ENCODE measurements at regions of chr18 and their contacts with region 1.

Region 1: GRCh38 chr18:50967714-50968661 is at the start of gene ELAC1:
- DNase-seq: peak; percentile 65
- ATAC-seq: peak; percentile 94
- H3K4me3 ChIP-seq: peak within 1 kb of the TSS; percentile 78
- H3K27ac ChIP-seq: peak within 1 kb of the TSS; percentile 45
- H3K4me1 ChIP-seq: peaks cover 17% of the 10 kb centered on the region
- H3K27me3 ChIP-seq: no peaks in the 10 kb centered on the region
- CTCF ChIP-seq: no peak
- total RNA-seq, gene ELAC1: 1.7 and 4.4 TPM in 2 replicates

Region 2: DNA sequence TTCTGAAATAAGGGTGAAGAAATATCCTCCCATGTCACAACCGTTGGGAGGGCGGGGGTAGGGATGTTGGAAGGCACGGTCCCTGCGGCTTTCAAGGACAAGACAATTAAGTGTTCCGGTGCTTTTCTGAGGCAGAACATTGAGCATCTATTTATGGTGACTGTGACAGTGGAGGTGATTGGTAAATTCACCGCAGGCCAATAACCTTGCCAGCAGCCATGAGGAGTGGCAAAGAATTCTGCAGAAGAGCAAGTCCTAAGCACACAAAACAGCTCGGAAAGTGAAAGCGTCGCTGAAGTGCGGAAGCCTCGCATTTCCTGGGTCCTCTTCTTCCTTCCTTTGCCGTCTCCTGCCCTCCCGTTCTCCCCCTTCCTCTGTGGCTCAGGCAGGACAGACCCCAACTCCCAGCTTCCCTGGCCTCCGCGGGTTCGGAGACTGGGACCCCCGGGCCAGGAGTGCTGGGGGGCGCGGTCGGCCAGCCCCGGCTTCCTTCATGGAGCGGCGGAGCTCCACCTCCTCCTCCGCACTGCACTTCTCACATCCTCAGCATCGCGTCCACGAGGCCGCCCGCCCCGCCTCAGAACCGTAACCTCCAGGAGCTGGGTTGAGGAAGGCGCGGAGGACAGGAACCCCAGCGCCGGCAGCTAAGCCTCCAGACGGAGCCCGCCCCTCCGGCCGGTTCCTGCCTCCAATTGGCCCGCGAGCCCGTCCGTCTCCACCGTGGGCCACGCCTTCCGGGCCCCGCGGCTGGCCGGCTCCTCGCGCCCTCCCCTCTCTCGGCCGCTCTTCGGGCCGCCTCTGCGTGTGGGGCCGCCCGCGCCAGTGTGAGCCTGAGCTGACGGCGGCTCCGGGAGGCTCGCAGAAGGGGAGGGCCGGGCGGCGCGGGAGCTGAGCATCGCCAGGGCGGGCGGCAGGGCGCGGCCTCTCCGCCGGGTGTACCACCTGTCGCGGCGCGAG is 89.4 kb before region 1 on chr18 and contains the start of gene ME2:
- CTCF ChIA-PET with region 1: no interaction called
- POLR2A ChIA-PET with region 1: no interaction called
- intact Hi-C with region 1: loop called (anchors 5 kb)
- DNase-seq: peak; percentile 72
- ATAC-seq: peak; percentile 93
- H3K4me3 ChIP-seq: peak within 1 kb of the TSS; percentile 75
- H3K27ac ChIP-seq: peak within 1 kb of the TSS; percentile 39; the same call in 1 of the 2 replicates
- H3K4me1 ChIP-seq: no peaks in the 10 kb centered on the region
- H3K27me3 ChIP-seq: no peaks in the 10 kb centered on the region
- CTCF ChIP-seq: no peak
- total RNA-seq, gene ME2: 21.9 and 29.1 TPM in 2 replicates

Region 3: DNA sequence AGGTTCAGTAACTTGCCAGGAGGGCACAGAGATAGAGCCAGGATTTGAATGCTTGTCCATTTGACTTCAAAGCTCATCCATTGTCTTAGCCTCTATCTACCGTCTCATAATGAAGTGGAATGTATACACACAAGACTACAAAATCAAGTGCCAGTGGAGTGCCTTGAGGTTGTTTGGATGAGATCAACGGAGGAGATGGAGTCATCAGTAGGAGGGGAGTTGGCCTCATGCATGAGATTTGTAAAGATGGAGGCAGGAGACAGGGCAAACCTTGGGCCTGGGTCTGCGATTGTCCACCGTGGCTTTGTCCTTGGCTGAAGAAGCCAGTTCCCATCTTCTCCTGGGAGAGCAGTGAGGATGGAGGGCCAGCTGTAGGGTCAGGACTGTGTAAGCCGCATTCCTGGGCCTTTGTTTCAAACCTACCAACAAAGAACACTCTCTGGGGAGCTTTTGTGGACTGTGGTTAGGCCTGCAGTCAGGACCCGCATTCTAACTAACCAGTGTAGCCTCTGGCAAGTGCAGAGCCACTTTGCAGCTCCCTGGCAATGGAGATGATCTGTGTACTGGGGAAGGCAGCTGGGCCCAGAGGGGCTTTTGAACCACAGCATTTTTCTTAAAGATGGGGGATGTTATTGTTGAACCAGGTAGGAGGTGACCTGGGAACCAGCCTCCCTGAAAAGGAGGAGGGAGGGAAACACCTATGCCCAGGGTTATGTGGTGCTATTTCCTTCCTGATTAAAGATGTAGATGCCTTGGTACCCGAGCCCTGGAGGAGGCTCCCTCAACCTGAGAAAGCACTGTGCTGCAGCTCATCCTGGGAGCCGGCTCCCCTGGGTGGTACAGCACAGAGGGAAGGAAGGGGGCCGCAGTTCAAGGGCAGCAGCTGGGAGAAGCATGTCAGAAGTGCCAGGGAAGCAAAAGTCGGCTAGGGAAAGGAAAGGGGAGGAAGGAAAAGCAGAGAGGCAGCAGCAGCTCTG is 49.2 kb after region 1 on chr18:
- CTCF ChIA-PET with region 1: no interaction called
- POLR2A ChIA-PET with region 1: no interaction called
- intact Hi-C with region 1: no loop called
- DNase-seq: no peak
- ATAC-seq: no peak
- H3K4me3 ChIP-seq: no peak overlapping the region
- H3K27ac ChIP-seq: no peak overlapping the region
- H3K4me1 ChIP-seq: no peaks in the 10 kb centered on the region
- H3K27me3 ChIP-seq: no peaks in the 10 kb centered on the region
- CTCF ChIP-seq: no peak

Region 4: GRCh38 chr18:51029694-51030536 is 61.9 kb after region 1 on chr18 and contains the start of gene SMAD4:
- CTCF ChIA-PET with region 1: no interaction called
- POLR2A ChIA-PET with region 1: no interaction called
- intact Hi-C with region 1: loop called (anchors 1 kb)
- DNase-seq: peak; percentile 78
- ATAC-seq: peak; percentile 77
- H3K4me3 ChIP-seq: peak within 1 kb of the TSS; percentile 80
- H3K27ac ChIP-seq: 0 out of 2 replicates have a peak within 1 kb of the TSS, but pooled peaks have one; percentile 13
- H3K4me1 ChIP-seq: peaks cover 13% of the 10 kb centered on the region; the same call in 1 of the 2 replicates
- H3K27me3 ChIP-seq: no peaks in the 10 kb centered on the region
- CTCF ChIP-seq: no peak
- total RNA-seq, gene SMAD4: 19.7 and 42.8 TPM in 2 replicates

Region 5: GRCh38 chr18:52409727-52410126 is 1441.7 kb after region 1 on chr18:
- CTCF ChIA-PET with region 1: no interaction called
- POLR2A ChIA-PET with region 1: no interaction called
- intact Hi-C with region 1: no loop called
- DNase-seq: peak; percentile 19
- ATAC-seq: no peak
- H3K4me3 ChIP-seq: no peak overlapping the region
- H3K27ac ChIP-seq: no peak overlapping the region
- H3K4me1 ChIP-seq: no peaks in the 10 kb centered on the region
- H3K27me3 ChIP-seq: no peaks in the 10 kb centered on the region
- CTCF ChIP-seq: 0 out of 2 replicates have a peak, but pooled peaks have one; percentile 8

Measured in PC-3 (cell line).